GM10248 (cell line): ENCODE measurements at regions of chr12 and their contacts with region 1.

Region 1: GRCh38 chr12:102806110-102806509 is 110.9 kb downstream of the PAH start:
- DNase-seq: no peak
- CTCF ChIP-seq: no peak

Region 2: GRCh38 chr12:102816816-102817434 is 10.8 kb after region 1 on chr12:
- CTCF ChIA-PET with region 1: interaction called, 17 read pairs
- POLR2A ChIA-PET with region 1: no interaction called
- DNase-seq: peak; percentile 23
- CTCF ChIP-seq: peak; percentile 36

Region 3: GRCh38 chr12:103353913-103354312 is 547.8 kb after region 1 on chr12:
- CTCF ChIA-PET with region 1: no interaction called
- POLR2A ChIA-PET with region 1: no interaction called
- DNase-seq: no peak
- CTCF ChIP-seq: no peak